Caco-2 (cell line): ENCODE measurements at regions of chr1 and their contacts with region 1.

Region 1: DNA sequence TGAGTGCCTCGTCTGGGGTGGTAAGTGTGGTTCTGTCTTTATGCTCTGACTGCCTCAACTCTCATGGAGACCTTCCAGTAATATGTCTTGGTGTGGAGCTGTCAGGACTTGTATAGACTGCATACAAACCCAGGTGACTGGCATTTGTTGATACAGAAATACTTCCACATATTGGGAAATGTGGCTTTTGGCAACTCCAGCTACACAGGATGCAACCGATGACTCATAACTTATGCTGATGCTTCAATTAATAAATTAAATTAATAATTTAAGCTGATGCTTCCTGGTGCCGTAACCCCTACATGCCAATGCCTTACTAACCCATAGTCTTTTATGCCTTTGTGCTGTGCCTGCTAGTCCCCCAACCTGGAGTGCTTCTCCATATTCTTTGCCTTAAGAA is 72.3 kb upstream of the ARTN start:
- DNase-seq: no peak
- H3K4me3 ChIP-seq: no peak overlapping the region
- H3K4me3 Mint-ChIP-seq: no peak overlapping the region
- H3K27ac Mint-ChIP-seq: no peak overlapping the region
- H3K4me1 ChIP-seq: no peaks in the 10 kb centered on the region
- H3K4me1 Mint-ChIP-seq: no peaks in the 10 kb centered on the region
- H3K27me3 ChIP-seq: no peaks in the 10 kb centered on the region
- H3K27me3 Mint-ChIP-seq: no peaks in the 10 kb centered on the region
- CTCF ChIP-seq: no peak

Region 2: GRCh38 chr1:43634721-43635120 is 226.6 kb before region 1 on chr1:
- CTCF ChIA-PET with region 1: no interaction called
- POLR2A ChIA-PET with region 1: no interaction called
- intact Hi-C with region 1: no loop called
- DNase-seq: peak; percentile 34 to 58
- H3K4me3 ChIP-seq: no peak overlapping the region
- H3K4me3 Mint-ChIP-seq: no peak overlapping the region
- H3K27ac Mint-ChIP-seq: no peak overlapping the region
- H3K4me1 ChIP-seq: 0 out of 2 replicates have a peak, but pooled peaks cover 8% of the 10 kb centered on the region
- H3K4me1 Mint-ChIP-seq: peaks cover 7% of the 10 kb centered on the region
- H3K27me3 ChIP-seq: no peaks in the 10 kb centered on the region
- H3K27me3 Mint-ChIP-seq: no peaks in the 10 kb centered on the region
- CTCF ChIP-seq: no peak

Region 3: DNA sequence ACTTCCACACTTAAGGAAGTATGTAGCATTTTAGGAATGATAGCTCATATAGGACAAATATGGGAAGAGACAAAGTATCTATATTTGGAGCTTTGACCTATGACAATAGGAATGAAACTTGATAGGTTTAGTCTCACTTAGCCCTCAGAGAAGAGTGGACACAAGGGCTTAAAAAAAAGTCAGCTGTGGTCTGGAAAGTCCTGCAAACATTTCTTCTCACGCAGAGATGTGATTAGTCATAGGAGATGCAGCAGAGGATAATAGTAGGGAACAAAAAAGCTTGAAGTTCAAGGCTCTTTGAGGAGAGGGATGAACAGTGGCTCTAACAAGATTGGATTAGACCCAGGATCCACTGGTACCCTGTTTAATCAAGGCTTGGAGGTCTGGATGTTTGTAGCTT is 528.9 kb after region 1 on chr1:
- CTCF ChIA-PET with region 1: no interaction called
- POLR2A ChIA-PET with region 1: interaction called, 13 read pairs
- intact Hi-C with region 1: no loop called
- DNase-seq: no peak
- H3K4me3 ChIP-seq: no peak overlapping the region
- H3K4me3 Mint-ChIP-seq: no peak overlapping the region
- H3K27ac Mint-ChIP-seq: no peak overlapping the region
- H3K4me1 ChIP-seq: no peaks in the 10 kb centered on the region
- H3K4me1 Mint-ChIP-seq: no peaks in the 10 kb centered on the region
- H3K27me3 ChIP-seq: no peaks in the 10 kb centered on the region
- H3K27me3 Mint-ChIP-seq: peaks cover 8% of the 10 kb centered on the region
- CTCF ChIP-seq: no peak